CD14-positive monocyte (primary cell): ENCODE measurements at regions of chr11 and their contacts with region 1.

Region 1: GRCh38 chr11:132610216-132610615 is 922.1 kb downstream of the OPCML start:
- DNase-seq: no peak
- H3K4me3 ChIP-seq: no peak overlapping the region
- H3K4me3 Mint-ChIP-seq: no peak overlapping the region
- H3K27ac ChIP-seq: no peak overlapping the region
- H3K27ac Mint-ChIP-seq: no peak overlapping the region
- H3K4me1 ChIP-seq: no peaks in the 10 kb centered on the region
- H3K4me1 Mint-ChIP-seq: no peaks in the 10 kb centered on the region
- H3K27me3 ChIP-seq: no peaks in the 10 kb centered on the region
- H3K27me3 Mint-ChIP-seq: no peaks in the 10 kb centered on the region
- CTCF ChIP-seq: no peak

Region 2: DNA sequence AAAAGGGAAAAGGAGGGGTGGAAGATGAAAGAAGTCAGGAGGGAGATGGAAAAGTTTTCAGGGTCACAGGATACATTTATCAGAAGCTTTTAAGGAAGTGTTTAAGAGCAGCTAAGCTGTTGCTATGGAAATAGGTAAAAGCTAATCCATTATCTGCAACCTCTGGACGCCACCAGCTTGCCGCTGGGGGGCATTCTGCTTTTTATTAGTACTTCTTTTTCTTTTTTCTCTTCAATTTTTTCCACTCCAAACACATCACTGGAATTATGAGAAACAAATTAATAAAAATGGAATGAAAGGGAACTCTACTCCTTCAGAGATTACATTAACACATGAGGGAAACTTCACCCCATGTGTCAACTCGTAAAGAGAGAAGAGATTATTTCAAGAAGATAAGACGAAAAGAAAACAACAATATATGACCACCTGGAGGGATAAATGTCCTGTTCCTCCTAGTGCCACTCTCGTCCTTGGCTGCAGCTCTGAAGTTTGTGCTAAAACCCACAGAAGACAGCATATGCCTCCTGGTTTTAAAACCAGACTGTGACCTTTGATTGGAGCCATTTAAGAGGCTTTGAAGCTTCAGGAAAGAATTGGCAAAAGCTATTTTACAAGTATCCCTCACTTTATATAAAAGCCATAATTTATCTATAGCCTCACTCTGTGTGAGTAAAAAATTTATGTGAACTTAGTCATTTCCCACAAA is 50.7 kb before region 1 on chr11:
- intact Hi-C with region 1: loop called in 1 of 2 experiments (anchors 10 kb)
- DNase-seq: no peak
- H3K4me3 ChIP-seq: no peak overlapping the region
- H3K4me3 Mint-ChIP-seq: no peak overlapping the region
- H3K27ac ChIP-seq: no peak overlapping the region
- H3K27ac Mint-ChIP-seq: no peak overlapping the region
- H3K4me1 ChIP-seq: peaks cover 0 to 3% of the 10 kb centered on the region in 2 donors
- H3K4me1 Mint-ChIP-seq: peaks cover 2% of the 10 kb centered on the region
- H3K27me3 ChIP-seq: no peaks in the 10 kb centered on the region
- H3K27me3 Mint-ChIP-seq: no peaks in the 10 kb centered on the region
- CTCF ChIP-seq: no peak